Activated CD4-positive, alpha-beta T cell treated with anti-CD3 and anti-CD28 coated beads, Interleukin-2, amount 10 ng/mL, durations not matched to agents 24 days and 14 days (primary cell): ENCODE measurements at regions of chr15 and their contacts with region 1.

Region 1: DNA sequence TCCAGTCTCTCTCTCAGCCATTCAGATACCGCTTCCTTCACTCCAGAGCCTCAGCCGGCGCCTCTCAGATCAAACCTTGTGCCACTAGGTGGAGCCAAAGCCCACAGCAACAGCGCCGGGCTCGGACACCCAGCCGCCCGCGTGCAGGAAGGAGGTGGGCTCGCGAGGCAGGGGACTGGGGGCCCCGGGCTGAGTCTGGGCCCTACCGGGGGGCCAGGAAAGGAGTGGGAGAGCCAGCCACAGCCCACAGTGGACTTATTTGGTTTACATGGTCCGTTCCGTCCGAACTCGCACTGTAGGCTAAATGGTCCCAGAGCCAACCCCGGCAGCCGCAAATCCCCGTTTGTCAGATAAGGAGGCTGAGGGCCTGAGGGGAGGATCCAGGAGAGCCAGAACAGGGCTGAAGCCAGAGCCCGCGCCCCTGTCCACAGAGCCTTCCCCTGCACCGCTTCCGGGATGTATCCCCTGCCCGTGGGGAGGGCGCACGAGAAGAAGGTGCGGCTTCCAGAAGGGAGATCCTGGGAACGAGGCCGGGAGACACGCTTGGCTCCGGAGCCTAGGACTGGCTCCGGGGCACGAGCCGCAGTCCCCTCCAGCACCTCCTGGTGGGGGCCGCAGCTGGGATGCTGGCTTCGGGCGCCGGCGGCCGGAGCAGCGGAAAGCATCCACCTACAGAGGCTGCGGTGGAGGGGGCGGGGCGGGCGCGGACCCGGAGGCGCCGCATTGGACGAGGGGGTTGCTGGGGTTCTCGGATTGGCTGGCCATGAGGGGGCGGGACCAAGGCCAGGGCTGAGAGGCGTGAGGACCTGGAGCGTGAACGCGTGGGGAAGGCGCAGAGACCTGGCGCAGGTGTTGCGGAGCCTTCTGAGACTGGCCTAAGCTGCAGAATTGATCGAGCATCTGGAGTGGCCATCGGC is 6.5 kb upstream of the CYP11A1 start:
- DNase-seq: peak; percentile 98
- H3K4me3 Mint-ChIP-seq: peak overlapping the region; percentile 86
- H3K27ac Mint-ChIP-seq: peak overlapping the region; percentile 78
- H3K4me1 Mint-ChIP-seq: peaks cover 43% of the 10 kb centered on the region
- H3K27me3 Mint-ChIP-seq: peaks cover 31% of the 10 kb centered on the region

Region 2: DNA sequence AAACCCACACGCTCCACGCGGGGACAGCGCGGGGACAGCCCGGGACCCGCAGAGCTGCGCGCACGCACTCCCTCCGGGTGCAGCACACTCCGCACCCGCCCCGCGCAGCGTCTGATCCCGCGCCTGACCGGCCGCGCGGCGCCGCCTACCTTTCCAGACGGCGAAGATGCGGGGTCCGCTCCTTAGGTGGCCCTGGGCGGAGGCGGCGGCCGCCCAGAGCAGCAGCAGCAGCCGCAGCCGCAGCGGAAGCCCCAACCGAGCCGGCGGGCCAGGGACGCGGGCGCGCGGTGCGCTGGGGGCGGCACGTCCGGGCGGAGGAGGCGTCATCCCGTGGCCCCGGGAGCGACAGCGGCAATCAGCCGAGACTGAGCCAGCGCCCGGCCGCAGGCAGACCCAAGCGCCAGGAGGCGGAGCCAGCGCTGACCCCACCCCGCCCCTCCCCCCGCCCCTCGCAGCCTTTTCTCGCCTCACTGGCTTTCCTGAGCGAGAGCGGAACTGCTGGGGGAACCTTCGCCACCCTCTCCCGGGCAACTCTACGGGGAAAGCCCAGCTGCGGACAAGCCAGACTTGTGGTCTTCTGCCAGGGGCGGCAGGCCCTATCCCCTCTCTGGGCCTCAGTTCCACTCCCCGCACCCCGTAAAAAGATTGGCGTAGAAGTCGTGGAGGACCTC is 59.7 kb after region 1 on chr15 and contains the start of gene SEMA7A:
- intact Hi-C with region 1: loop called (anchors 1 kb)
- DNase-seq: peak; percentile 96
- H3K4me3 Mint-ChIP-seq: peak within 1 kb of the TSS; percentile 95
- H3K27ac Mint-ChIP-seq: peak within 1 kb of the TSS; percentile 86
- H3K4me1 Mint-ChIP-seq: peaks cover 72% of the 10 kb centered on the region
- H3K27me3 Mint-ChIP-seq: no peaks in the 10 kb centered on the region
- total RNA-seq, gene SEMA7A: 88.0 and 89.6 TPM in 2 replicates

Region 3: GRCh38 chr15:74460871-74461846 is 87.2 kb after region 1 on chr15 and contains the start of gene UBL7:
- intact Hi-C with region 1: loop called (anchors 1 kb)
- DNase-seq: peak; percentile 99
- H3K4me3 Mint-ChIP-seq: peak within 1 kb of the TSS; percentile 94
- H3K27ac Mint-ChIP-seq: peak within 1 kb of the TSS; percentile 94
- H3K4me1 Mint-ChIP-seq: peaks cover 42% of the 10 kb centered on the region
- H3K27me3 Mint-ChIP-seq: no peaks in the 10 kb centered on the region
- total RNA-seq, gene UBL7: 53.5 and 62.1 TPM in 2 replicates

Region 4: GRCh38 chr15:74540761-74541493 is 166.9 kb after region 1 on chr15 and contains the start of gene ARID3B:
- intact Hi-C with region 1: loop called (anchors 2 kb)
- DNase-seq: peak; percentile 97
- H3K4me3 Mint-ChIP-seq: peak within 1 kb of the TSS; percentile 98
- H3K27ac Mint-ChIP-seq: peak within 1 kb of the TSS; percentile 95
- H3K4me1 Mint-ChIP-seq: peaks cover 44% of the 10 kb centered on the region
- H3K27me3 Mint-ChIP-seq: no peaks in the 10 kb centered on the region
- total RNA-seq, gene ARID3B: 31.1 and 33.9 TPM in 2 replicates

Region 5: DNA sequence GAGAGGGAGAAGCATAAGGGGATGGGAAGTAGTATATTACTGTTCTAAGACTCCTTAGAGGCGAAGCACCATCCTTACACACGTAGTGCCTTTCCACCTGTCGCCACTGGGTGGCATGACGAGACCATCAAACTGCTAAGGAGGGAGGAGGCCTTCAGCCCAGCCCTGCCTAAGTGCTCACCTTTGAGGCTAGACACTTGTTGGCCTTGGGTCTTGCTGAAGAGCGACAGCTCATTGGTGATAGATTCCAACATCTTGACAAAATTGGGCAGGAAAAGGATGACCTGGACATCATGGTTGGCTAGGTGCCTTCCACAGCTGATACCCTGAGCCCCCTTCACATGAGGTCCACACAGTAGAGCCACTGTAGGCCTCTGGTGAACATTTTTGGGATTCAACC is 261.2 kb after region 1 on chr15:
- intact Hi-C with region 1: loop called (anchors 1 kb)
- DNase-seq: peak; percentile 93
- H3K4me3 Mint-ChIP-seq: no peak overlapping the region
- H3K27ac Mint-ChIP-seq: no peak overlapping the region
- H3K4me1 Mint-ChIP-seq: no peaks in the 10 kb centered on the region
- H3K27me3 Mint-ChIP-seq: no peaks in the 10 kb centered on the region

Region 6: DNA sequence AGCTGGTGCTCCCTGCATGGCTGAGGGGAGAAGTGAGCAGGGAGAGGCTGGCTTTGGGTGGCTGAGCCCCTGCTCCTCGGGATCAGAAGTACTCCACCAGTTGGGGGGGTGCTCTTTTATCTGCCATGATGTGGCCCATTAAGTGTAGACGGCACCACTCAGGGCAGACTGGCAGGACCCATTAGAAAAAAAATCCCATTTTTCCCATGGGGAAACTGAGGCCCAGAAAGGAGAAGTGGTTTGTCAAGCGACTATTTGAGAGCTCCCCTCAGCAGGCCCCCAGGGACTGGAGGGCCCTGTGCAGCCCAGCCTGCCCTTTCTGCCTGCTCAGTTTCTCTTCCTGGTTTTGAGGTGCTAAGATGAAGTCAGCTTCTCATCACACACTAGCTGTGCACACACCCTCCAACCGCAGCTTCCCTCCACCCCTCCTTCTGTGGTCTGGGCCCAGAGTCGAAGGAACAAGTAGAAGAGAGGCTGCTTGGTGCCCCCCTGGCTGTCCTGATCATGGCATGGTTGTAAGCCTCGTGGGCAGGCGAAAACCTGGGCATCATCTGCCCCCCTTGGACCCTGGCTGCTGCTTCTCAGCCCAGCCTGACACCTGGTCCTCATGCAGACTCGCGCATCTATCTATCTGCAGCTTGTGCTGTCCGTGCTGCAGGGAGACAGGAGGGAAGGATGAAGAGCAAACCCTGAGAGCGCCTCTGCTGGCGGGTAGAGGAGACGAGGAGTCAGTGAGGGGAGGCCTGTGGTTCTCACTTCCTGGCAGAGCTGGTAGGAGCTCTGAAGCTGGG is 413.5 kb after region 1 on chr15:
- intact Hi-C with region 1: loop called (anchors 5 kb)
- DNase-seq: peak; percentile 97
- H3K4me3 Mint-ChIP-seq: peak overlapping the region; percentile 96
- H3K27ac Mint-ChIP-seq: peak overlapping the region; percentile 99
- H3K4me1 Mint-ChIP-seq: peaks cover 68% of the 10 kb centered on the region
- H3K27me3 Mint-ChIP-seq: no peaks in the 10 kb centered on the region